ENCODE measurements at regions of chr4 and their contacts with region 1.

Region 1: GRCh38 chr4:170259631-170260153 is 169.9 kb upstream of the AADAT start:
- DNase-seq: peak; percentile 77
- ATAC-seq: peak; percentile 83
- H3K4me3 Mint-ChIP-seq: no peak overlapping the region
- H3K27ac Mint-ChIP-seq: no peak overlapping the region
- H3K4me1 Mint-ChIP-seq: no peaks in the 10 kb centered on the region
- H3K27me3 Mint-ChIP-seq: no peaks in the 10 kb centered on the region

Region 2: DNA sequence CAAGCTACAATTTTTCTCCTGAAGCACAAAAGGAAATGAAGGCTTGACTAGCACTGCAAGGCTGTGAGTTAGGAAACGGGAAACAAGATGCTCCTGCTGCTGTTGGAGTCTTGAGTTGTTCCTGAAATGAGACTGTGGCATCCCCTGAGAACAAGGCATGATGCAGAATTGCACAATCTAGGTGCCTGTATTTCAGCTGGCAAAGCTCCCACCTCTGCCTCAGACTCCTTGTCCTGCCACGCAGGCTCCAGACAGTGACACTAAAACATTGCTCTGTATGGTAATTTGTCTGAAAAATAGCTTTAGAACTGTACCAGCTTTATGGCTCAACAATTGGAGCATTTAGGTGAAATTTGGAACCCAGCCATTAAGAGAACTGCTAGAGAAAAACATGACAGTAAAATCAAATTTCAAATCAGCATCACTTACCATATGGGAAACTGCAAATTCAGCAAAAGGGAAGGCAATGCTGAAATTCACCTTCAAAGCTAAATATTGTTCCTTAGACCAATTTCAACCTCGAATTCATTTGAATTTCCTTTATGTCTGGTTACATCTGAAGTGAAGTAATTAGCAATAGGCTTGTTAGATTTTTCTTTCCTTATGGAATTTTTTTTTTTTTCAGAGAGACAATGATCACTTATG is 336.9 kb before region 1 on chr4:
- CTCF ChIA-PET with region 1: no interaction called
- POLR2A ChIA-PET with region 1: no interaction called
- intact Hi-C with region 1: no loop called
- DNase-seq: no peak
- ATAC-seq: no peak
- H3K4me3 Mint-ChIP-seq: no peak overlapping the region
- H3K27ac Mint-ChIP-seq: no peak overlapping the region
- H3K4me1 Mint-ChIP-seq: no peaks in the 10 kb centered on the region
- H3K27me3 Mint-ChIP-seq: peaks cover 3% of the 10 kb centered on the region

Region 3: DNA sequence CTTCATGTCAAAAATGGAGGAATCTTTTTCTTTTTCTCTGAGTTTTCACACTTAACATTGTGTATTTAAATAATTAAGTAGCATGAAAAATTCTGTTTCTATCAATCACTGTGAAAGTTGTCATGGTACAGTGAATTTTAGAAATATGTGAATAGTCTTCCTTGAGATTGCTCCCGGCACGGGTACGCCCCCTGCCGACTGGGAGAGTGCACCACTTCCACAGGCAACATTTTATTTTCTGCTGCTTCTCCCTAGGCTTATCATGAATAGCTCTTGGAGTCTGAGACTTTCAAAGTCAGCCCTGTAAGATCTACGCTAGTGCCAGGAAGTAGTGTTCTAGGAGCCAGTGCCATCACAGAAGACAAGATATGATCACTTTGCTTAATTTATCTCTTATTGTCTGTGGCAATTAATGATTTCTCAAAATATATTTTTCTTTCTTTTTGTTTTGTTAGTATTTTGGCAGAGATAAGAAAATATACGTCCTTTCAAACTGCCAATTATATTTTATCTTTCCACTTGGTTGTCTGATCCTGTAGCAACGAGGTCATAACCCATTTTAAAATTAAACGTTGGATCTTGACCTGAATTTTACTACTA is 593.8 kb after region 1 on chr4:
- CTCF ChIA-PET with region 1: no interaction called
- POLR2A ChIA-PET with region 1: no interaction called
- intact Hi-C with region 1: loop called (anchors 1 to 2 kb)
- DNase-seq: peak; percentile 54
- ATAC-seq: no peak
- H3K4me3 Mint-ChIP-seq: no peak overlapping the region
- H3K27ac Mint-ChIP-seq: no peak overlapping the region
- H3K4me1 Mint-ChIP-seq: no peaks in the 10 kb centered on the region
- H3K27me3 Mint-ChIP-seq: no peaks in the 10 kb centered on the region

Region 4: DNA sequence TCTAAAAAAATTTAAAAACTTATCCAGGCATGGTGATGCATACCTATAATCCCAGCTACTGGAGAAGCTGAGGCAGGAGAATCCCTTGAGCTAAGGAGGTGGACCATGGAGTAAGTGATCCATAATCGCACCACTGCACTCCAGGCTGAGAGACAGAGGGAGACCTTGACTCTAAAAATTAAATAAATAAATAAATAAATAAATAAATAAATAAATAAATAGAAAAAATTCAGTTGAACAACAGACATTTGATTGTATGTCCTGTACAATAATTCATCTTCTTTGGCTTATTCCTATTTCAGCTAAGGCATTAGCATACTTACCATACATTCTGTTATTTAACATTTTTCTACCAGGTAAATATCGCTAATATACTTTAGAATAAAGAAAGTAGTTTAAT is 827.4 kb after region 1 on chr4:
- CTCF ChIA-PET with region 1: no interaction called
- POLR2A ChIA-PET with region 1: no interaction called
- intact Hi-C with region 1: no loop called
- DNase-seq: no peak
- ATAC-seq: no peak
- H3K4me3 Mint-ChIP-seq: no peak overlapping the region
- H3K27ac Mint-ChIP-seq: no peak overlapping the region
- H3K4me1 Mint-ChIP-seq: no peaks in the 10 kb centered on the region
- H3K27me3 Mint-ChIP-seq: no peaks in the 10 kb centered on the region